A549 (cell line): ENCODE measurements at regions of chr4 and their contacts with region 1.

Region 1: GRCh38 chr4:6873792-6874461 is 35.7 kb upstream of the TBC1D14 start:
- DNase-seq: peak; percentile 30 to 65
- ATAC-seq: peak; percentile 84 to 93
- H3K4me3 ChIP-seq: no peak overlapping the region
- H3K27ac ChIP-seq: no peak overlapping the region
- H3K4me1 ChIP-seq: no peaks in the 10 kb centered on the region
- CTCF ChIP-seq: peak; percentile 67
- EP300 ChIP-seq: no peak
- POLR2A ChIP-seq: no peak
- RAD21 ChIP-seq: peak; percentile 66 to 71

Region 2: DNA sequence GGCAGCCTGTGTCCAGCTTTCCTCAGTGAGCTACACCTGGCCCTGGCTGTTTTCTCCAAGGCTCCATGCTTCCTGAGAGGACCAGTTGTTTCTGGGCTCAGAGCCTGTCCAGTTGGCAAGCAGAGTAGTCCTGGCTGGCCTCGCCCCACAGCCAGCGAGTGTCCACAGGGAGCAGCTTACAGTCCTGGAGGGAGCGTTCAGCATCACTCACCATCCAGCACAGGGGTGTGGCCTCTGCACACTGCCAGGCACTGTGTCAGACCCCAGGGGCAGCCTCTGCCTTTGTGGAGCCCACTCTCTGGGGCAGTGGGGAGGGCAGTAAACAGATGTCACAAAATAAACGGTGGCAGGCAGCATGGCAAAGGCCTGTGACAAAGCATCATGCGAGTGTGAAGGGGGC is 1139.1 kb before region 1 on chr4:
- CTCF ChIA-PET with region 1: no interaction called
- POLR2A ChIA-PET with region 1: no interaction called
- DNase-seq: no peak
- ATAC-seq: no peak
- H3K4me3 ChIP-seq: no peak overlapping the region
- H3K27ac ChIP-seq: no peak overlapping the region
- H3K4me1 ChIP-seq: no peaks in the 10 kb centered on the region
- CTCF ChIP-seq: no peak
- EP300 ChIP-seq: no peak
- POLR2A ChIP-seq: no peak
- RAD21 ChIP-seq: no peak

Region 3: DNA sequence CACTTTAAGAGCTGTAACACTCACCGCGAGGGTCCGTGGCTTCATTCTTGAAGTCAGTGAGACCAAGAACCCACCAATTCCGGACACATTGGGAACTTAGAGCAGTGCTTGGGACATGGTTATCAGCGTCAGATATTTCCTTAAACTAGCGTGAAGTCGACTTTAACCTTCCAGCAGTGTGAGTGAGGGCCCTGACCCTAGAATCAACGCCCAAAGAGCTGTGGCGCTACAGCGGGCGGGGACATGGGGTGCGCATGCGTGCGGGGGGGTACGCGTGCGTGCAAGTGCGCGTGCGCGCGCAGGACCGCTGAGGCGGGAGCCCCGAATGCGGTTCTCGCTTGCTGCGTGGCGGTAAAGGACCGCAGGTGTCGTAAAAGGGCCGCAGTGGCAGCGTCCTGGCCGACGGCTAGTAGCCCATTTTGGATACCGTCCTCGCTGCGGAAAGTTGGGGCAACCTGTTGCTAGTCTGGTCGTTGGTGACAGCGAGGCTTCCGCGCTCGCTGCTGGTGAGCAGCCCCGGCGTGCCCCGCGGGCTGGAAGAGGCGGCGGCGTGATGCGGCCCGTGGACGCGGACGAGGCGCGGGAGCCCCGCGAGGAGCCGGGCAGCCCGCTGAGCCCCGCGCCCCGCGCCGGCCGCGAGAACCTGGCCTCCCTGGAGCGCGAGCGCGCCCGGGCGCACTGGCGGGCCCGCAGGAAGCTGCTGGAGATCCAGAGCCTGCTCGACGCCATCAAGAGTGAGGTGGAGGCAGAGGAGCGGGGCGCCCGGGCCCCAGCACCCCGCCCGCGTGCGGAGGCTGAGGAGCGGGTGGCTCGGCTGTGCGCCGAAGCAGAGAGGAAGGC is 200.0 kb before region 1 on chr4:
- CTCF ChIA-PET with region 1: no interaction called
- POLR2A ChIA-PET with region 1: no interaction called
- DNase-seq: peak; percentile 89 to 96
- ATAC-seq: peak; percentile 90 to 91
- H3K4me3 ChIP-seq: peak overlapping the region; percentile 85
- H3K27ac ChIP-seq: peak overlapping the region; percentile 88 to 91
- H3K4me1 ChIP-seq: peaks cover 20% of the 10 kb centered on the region
- CTCF ChIP-seq: no peak
- EP300 ChIP-seq: no peak
- POLR2A ChIP-seq: peak; percentile 62
- RAD21 ChIP-seq: no peak

Region 4: DNA sequence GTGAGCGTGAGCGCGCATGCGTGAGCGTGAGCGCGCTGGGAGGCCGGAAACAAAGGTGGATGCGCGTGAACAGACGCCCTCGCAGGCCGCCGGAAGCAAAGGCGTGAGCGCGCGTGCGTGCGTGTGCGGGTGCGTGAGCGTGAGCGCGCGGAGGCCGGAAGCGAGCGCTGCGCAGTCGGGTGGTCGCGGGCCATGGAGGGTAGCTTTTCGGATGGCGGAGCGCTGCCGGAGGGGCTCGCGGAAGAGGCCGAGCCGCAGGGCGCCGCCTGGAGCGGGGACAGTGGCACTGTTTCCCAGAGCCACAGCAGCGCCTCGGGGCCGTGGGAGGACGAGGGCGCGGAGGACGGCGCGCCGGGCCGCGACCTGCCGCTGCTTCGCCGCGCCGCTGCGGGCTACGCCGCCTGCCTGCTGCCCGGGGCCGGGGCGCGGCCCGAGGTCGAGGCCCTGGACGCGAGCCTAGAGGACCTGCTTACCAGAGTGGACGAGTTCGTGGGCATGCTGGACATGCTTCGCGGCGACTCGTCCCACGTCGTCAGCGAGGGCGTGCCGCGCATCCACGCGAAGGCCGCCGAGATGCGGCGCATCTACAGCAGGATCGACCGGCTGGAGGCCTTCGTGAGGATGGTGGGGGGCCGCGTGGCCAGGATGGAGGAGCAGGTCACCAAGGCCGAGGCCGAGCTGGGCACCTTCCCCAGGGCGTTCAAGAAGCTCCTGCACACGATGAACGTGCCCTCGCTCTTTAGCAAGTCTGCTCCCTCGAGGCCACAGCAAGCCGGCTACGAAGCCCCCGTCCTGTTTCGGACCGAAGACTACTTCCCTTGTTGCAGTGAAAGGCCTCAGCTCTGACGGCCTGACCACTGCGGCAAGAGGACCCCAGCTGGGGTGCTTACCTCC is 157.7 kb before region 1 on chr4 and contains the start of gene BLOC1S4:
- CTCF ChIA-PET with region 1: interaction called, 168 read pairs
- POLR2A ChIA-PET with region 1: interaction called, 8 read pairs
- DNase-seq: peak; percentile 82 to 93
- ATAC-seq: peak; percentile 79 to 82
- H3K4me3 ChIP-seq: peak within 1 kb of the TSS; percentile 81
- H3K27ac ChIP-seq: peak within 1 kb of the TSS; percentile 92 to 99
- H3K4me1 ChIP-seq: peaks cover 21% of the 10 kb centered on the region; the same call in 1 of the 3 replicates
- CTCF ChIP-seq: no peak
- EP300 ChIP-seq: no peak
- POLR2A ChIP-seq: peak; percentile 69
- RAD21 ChIP-seq: no peak
- polyA plus RNA-seq, gene BLOC1S4: 11.7 and 13.2 TPM in 2 replicates

Region 5: GRCh38 chr4:6783053-6783981 is 90.6 kb before region 1 on chr4:
- CTCF ChIA-PET with region 1: interaction called, 14 read pairs
- POLR2A ChIA-PET with region 1: no interaction called
- DNase-seq: peak; percentile 73 to 78
- ATAC-seq: peak; percentile 82 to 86
- H3K4me3 ChIP-seq: peak overlapping the region; percentile 91
- H3K27ac ChIP-seq: peak overlapping the region; percentile 99 to 100
- H3K4me1 ChIP-seq: peaks cover 36% of the 10 kb centered on the region
- CTCF ChIP-seq: no peak
- EP300 ChIP-seq: no peak
- POLR2A ChIP-seq: peak; percentile 27
- RAD21 ChIP-seq: no peak; a peak in 1 of 5 replicates

Region 6: GRCh38 chr4:6834867-6835266 is 39.1 kb before region 1 on chr4:
- CTCF ChIA-PET with region 1: interaction called, 11 read pairs
- POLR2A ChIA-PET with region 1: no interaction called
- DNase-seq: no peak
- ATAC-seq: no peak
- H3K4me3 ChIP-seq: no peak overlapping the region
- H3K27ac ChIP-seq: no peak overlapping the region
- H3K4me1 ChIP-seq: peaks cover 6% of the 10 kb centered on the region; the same call in 2 of the 3 replicates
- CTCF ChIP-seq: no peak
- EP300 ChIP-seq: no peak
- POLR2A ChIP-seq: no peak
- RAD21 ChIP-seq: no peak

Region 7: DNA sequence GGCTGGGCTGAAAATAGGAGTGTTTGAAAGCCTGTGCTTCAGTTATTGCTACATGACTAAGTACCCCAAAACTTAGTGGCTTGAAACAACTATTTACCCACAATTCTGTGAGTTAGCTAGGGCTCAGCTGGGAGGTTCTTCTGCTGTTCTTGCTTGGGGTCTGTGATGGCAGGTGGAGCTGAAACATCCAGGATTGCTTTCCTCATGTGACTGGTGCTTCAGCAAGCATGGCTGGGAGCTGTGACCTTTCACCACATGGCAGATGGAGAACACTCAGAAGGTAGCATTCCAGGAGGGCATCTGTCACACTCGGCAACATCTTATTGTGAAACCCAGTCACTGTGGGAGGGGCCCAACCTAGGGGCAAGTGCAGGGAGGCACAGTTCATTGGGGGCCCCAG is 21.3 kb before region 1 on chr4:
- CTCF ChIA-PET with region 1: interaction called, 17 read pairs
- POLR2A ChIA-PET with region 1: no interaction called
- DNase-seq: no peak
- ATAC-seq: no peak
- H3K4me3 ChIP-seq: no peak overlapping the region
- H3K27ac ChIP-seq: no peak overlapping the region
- H3K4me1 ChIP-seq: peaks cover 26% of the 10 kb centered on the region
- CTCF ChIP-seq: no peak
- EP300 ChIP-seq: no peak
- POLR2A ChIP-seq: no peak
- RAD21 ChIP-seq: no peak

Region 8: DNA sequence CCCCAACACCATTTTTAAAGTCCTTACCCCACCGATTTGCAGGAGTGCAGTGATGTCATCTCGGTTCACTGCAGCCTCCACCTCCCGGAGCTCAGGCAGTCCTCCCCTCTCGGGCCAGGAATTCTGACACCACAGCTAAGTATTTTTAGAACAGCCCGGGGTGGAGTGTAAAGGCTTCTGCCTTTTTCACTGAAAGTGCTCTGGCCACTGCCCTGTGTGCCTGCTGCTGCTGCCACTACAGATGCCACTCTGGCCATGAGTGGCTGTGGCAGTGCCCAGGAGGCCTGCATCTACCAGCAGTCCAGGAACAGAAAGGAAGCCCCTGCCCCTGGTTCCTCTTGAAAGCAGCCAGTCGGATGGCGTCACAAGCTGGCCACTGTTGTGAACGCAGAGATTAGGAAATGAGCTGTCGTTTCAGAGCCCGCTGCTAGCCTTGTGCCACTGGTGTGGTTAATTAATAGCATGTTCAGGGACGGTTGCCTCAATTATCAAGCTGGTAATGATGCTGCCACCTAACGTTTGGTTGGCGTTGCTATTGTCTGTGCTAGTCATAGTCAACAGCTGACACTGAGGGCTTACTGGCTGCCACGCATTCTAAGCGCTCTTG is 12.1 kb after region 1 on chr4:
- CTCF ChIA-PET with region 1: interaction called, 62 read pairs
- POLR2A ChIA-PET with region 1: no interaction called
- DNase-seq: peak in 1 of 2 experiments; percentile 31
- ATAC-seq: peak; percentile 64 to 65; a peak in 5 of 6 replicates
- H3K4me3 ChIP-seq: no peak overlapping the region
- H3K27ac ChIP-seq: peak overlapping the region; percentile 32 to 78; a peak in 4 of 6 replicates
- H3K4me1 ChIP-seq: peaks cover 11% of the 10 kb centered on the region; the same call in 2 of the 3 replicates
- CTCF ChIP-seq: peak; percentile 23; the same call in 1 of the 3 replicates
- EP300 ChIP-seq: no peak
- POLR2A ChIP-seq: no peak
- RAD21 ChIP-seq: peak in 1 of 2 experiments; percentile 26; a peak in 1 of 5 replicates